ENCODE measurements at regions of chr12 and their contacts with region 1.

Region 1: GRCh38 chr12:56461235-56462159 is 6.9 kb upstream of the SPRYD4 start:
- DNase-seq: no peak
- ATAC-seq: no peak
- H3K4me3 ChIP-seq: no peak overlapping the region
- H3K4me3 Mint-ChIP-seq: no peak overlapping the region
- H3K27ac ChIP-seq: no peak overlapping the region
- H3K27ac Mint-ChIP-seq: no peak overlapping the region
- H3K4me1 ChIP-seq: no peaks in the 10 kb centered on the region
- H3K4me1 Mint-ChIP-seq: peaks cover 4% of the 10 kb centered on the region
- H3K27me3 ChIP-seq: no peaks in the 10 kb centered on the region
- H3K27me3 Mint-ChIP-seq: no peaks in the 10 kb centered on the region
- CTCF ChIP-seq: no peak

Region 2: DNA sequence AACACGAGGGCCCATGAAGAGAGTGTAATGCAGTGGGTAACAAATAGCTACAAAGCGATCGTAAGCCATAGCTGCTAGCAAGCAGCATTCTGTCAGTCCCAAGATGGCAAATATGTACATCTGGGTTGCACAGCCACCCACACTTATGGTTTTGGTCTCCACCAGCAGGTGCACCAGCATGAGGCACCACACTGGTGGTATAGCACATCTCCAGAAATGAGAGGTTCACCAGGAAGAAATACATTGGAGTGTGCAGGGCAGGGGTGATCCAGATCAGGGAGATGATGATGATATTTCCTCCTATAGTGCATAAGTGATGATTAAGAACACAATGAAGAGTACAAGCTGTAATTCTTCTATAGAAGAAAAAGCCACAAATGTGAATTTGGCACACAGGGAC is 1267.1 kb before region 1 on chr12:
- CTCF ChIA-PET with region 1: no interaction called
- POLR2A ChIA-PET with region 1: no interaction called
- intact Hi-C with region 1: no loop called
- DNase-seq: no peak
- ATAC-seq: no peak
- H3K4me3 ChIP-seq: no peak overlapping the region
- H3K4me3 Mint-ChIP-seq: no peak overlapping the region
- H3K27ac ChIP-seq: no peak overlapping the region
- H3K27ac Mint-ChIP-seq: no peak overlapping the region
- H3K4me1 ChIP-seq: no peaks in the 10 kb centered on the region
- H3K4me1 Mint-ChIP-seq: no peaks in the 10 kb centered on the region
- H3K27me3 ChIP-seq: no peaks in the 10 kb centered on the region
- H3K27me3 Mint-ChIP-seq: peaks cover 41% of the 10 kb centered on the region
- CTCF ChIP-seq: no peak

Region 3: DNA sequence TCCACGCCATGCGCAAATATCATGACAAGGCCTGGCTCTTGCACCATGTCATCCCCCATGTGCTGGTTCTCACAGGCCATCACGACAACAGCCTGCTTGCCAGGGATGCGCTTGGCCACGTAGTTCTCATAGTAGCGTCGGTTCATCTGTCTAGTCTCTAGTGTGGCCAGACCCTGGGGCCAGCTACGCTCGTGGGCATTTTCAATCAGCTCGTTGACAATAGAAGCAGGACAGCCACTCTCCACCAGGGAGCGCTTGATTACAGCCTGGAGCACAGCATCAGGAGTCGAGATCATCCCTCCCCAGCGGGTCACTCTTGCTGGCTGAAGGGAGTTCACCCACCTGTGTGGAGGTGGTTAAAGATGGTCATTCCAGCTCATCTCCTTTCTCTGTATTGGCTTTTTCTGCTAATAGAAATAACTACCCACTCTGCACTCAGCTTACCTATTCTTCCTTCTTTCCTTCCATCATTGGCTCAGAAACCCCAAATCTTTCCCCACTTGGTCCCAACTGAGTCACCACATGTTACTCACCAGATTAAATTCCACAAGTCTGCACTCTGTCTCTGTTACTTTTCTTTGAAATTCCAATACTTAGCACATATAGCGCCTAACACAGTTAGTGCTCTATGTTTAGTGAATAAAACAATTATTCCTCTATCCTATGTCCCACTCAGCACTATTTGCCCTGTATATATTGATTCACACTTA is 254.9 kb before region 1 on chr12:
- CTCF ChIA-PET with region 1: interaction called, 9 read pairs
- POLR2A ChIA-PET with region 1: no interaction called
- intact Hi-C with region 1: loop called (anchors 1 to 5 kb)
- DNase-seq: peak in 6 of 9 experiments; percentile 31 to 59 (median 48)
- ATAC-seq: peak; percentile 63
- H3K4me3 ChIP-seq: no peak overlapping the region
- H3K4me3 Mint-ChIP-seq: no peak overlapping the region
- H3K27ac ChIP-seq: no peak overlapping the region
- H3K27ac Mint-ChIP-seq: no peak overlapping the region
- H3K4me1 ChIP-seq: no peaks in the 10 kb centered on the region
- H3K4me1 Mint-ChIP-seq: no peaks in the 10 kb centered on the region
- H3K27me3 ChIP-seq: no peaks in the 10 kb centered on the region
- H3K27me3 Mint-ChIP-seq: no peaks in the 10 kb centered on the region
- CTCF ChIP-seq: no peak

Region 4: DNA sequence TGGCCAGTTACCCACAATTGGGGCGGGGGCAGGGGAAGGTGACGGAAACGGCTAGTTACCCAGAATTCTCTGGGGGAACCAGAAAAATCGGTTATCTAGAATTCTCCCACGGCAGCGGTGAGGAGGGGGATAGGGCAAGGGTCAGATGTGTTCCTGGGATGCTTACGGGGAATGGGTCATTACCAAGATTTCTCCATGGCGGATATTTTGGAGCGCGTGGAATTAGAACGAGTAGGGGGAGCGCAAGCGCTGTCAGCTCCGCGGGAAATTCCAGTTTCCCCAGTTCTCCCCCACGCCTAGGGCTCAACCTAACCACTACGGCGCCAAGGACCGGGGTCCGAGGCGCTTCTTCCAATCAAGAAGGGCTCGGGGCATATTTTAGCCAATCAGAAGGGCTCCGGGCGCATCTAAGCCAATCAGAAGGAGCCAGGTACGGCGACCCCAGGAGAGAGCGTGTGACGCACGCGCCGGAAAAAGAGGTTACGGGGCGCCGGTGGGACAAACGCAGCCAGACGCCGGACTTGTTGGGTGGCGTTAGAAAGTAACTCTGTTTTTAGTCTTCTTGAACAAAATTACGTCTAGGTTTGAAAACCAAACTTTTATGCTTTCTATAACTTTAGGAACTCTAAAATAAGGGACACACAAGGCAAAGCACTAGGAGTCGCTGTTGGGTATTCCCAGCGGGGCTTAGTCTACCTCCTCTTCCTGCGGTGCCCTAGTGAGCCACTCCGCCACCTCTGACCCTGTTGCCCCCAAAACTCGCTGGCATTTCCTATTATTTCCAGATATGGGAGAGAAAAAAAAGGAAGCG is 127.6 kb before region 1 on chr12 and contains the start of gene PAN2:
- CTCF ChIA-PET with region 1: interaction called, 23 read pairs
- POLR2A ChIA-PET with region 1: interaction called, 5 read pairs
- intact Hi-C with region 1: loop called (anchors 1 to 2 kb)
- DNase-seq: peak; percentile 87 to 98 (median 93)
- ATAC-seq: peak; percentile 80
- H3K4me3 ChIP-seq: peak within 1 kb of the TSS; percentile 47 to 85
- H3K4me3 Mint-ChIP-seq: peak within 1 kb of the TSS; percentile 96
- H3K27ac ChIP-seq: peak within 1 kb of the TSS; percentile 97 to 100
- H3K27ac Mint-ChIP-seq: peak within 1 kb of the TSS; percentile 100
- H3K4me1 ChIP-seq: peaks cover 27% of the 10 kb centered on the region
- H3K4me1 Mint-ChIP-seq: peaks cover 53% of the 10 kb centered on the region
- H3K27me3 ChIP-seq: no peaks in the 10 kb centered on the region
- H3K27me3 Mint-ChIP-seq: no peaks in the 10 kb centered on the region
- CTCF ChIP-seq: peak; percentile 64
- total RNA-seq, gene PAN2: 111 to 113 TPM

Measured in CD8-positive, alpha-beta T cell (primary cell).